ENCODE measurements at regions of chr5 and their contacts with region 1.

Region 1: GRCh38 chr5:79133657-79134451 is 22.2 kb downstream of the BHMT start:
- DNase-seq: peak; percentile 90
- ATAC-seq: peak; percentile 93
- H3K4me3 Mint-ChIP-seq: peak overlapping the region; percentile 61
- H3K27ac Mint-ChIP-seq: peak overlapping the region; percentile 88
- H3K4me1 Mint-ChIP-seq: peaks cover 22% of the 10 kb centered on the region
- H3K27me3 Mint-ChIP-seq: peaks cover 3% of the 10 kb centered on the region
- CTCF ChIP-seq: no peak

Region 2: DNA sequence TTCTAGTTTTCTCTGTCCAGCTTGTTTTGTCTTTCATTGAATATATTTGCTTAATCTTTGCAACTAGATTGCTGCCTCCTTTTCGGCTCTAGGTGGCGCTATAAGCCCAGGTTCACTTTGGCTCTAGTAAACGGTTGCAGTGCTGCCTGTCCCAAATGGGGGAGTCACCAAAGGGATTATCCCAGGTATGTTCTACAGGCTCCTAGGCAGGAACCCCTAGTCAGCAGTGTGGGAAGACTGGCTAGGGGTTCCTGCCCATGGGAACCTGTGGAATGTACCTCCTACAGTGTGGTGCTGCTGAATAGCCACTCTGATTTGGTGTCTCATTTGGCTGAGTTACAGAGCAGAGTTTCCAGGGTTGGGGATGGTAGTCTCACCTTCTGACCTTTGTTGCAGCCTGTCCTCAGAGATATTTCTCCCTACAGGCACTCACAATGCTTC is 233.9 kb before region 1 on chr5:
- CTCF ChIA-PET with region 1: interaction called, 11 read pairs
- POLR2A ChIA-PET with region 1: no interaction called
- intact Hi-C with region 1: no loop called
- DNase-seq: peak; percentile 43
- ATAC-seq: no peak
- H3K4me3 Mint-ChIP-seq: no peak overlapping the region
- H3K27ac Mint-ChIP-seq: no peak overlapping the region
- H3K4me1 Mint-ChIP-seq: no peaks in the 10 kb centered on the region
- H3K27me3 Mint-ChIP-seq: no peaks in the 10 kb centered on the region
- CTCF ChIP-seq: peak; percentile 33

Region 3: GRCh38 chr5:79020861-79021561 is 112.8 kb before region 1 on chr5:
- CTCF ChIA-PET with region 1: interaction called, 384 read pairs
- POLR2A ChIA-PET with region 1: interaction called, 3 read pairs
- intact Hi-C with region 1: loop called (anchors 1 kb)
- DNase-seq: peak; percentile 66
- ATAC-seq: peak; percentile 51
- H3K4me3 Mint-ChIP-seq: no peak overlapping the region
- H3K27ac Mint-ChIP-seq: no peak overlapping the region
- H3K4me1 Mint-ChIP-seq: peaks cover 5% of the 10 kb centered on the region
- H3K27me3 Mint-ChIP-seq: peaks cover 41% of the 10 kb centered on the region
- CTCF ChIP-seq: peak; percentile 68

Region 4: GRCh38 chr5:79074641-79075040 is 59.2 kb before region 1 on chr5:
- CTCF ChIA-PET with region 1: interaction called, 10 read pairs
- POLR2A ChIA-PET with region 1: no interaction called
- intact Hi-C with region 1: no loop called
- DNase-seq: peak; percentile 14
- ATAC-seq: peak; percentile 64
- H3K4me3 Mint-ChIP-seq: no peak overlapping the region
- H3K27ac Mint-ChIP-seq: no peak overlapping the region
- H3K4me1 Mint-ChIP-seq: peaks cover 11% of the 10 kb centered on the region
- H3K27me3 Mint-ChIP-seq: peaks cover 17% of the 10 kb centered on the region
- CTCF ChIP-seq: no peak

Region 5: GRCh38 chr5:79093762-79094161 is 40.1 kb before region 1 on chr5:
- CTCF ChIA-PET with region 1: no interaction called
- POLR2A ChIA-PET with region 1: no interaction called
- intact Hi-C with region 1: no loop called
- DNase-seq: no peak
- ATAC-seq: no peak
- H3K4me3 Mint-ChIP-seq: no peak overlapping the region
- H3K27ac Mint-ChIP-seq: no peak overlapping the region
- H3K4me1 Mint-ChIP-seq: no peaks in the 10 kb centered on the region
- H3K27me3 Mint-ChIP-seq: peaks cover 5% of the 10 kb centered on the region
- CTCF ChIP-seq: no peak

Region 6: DNA sequence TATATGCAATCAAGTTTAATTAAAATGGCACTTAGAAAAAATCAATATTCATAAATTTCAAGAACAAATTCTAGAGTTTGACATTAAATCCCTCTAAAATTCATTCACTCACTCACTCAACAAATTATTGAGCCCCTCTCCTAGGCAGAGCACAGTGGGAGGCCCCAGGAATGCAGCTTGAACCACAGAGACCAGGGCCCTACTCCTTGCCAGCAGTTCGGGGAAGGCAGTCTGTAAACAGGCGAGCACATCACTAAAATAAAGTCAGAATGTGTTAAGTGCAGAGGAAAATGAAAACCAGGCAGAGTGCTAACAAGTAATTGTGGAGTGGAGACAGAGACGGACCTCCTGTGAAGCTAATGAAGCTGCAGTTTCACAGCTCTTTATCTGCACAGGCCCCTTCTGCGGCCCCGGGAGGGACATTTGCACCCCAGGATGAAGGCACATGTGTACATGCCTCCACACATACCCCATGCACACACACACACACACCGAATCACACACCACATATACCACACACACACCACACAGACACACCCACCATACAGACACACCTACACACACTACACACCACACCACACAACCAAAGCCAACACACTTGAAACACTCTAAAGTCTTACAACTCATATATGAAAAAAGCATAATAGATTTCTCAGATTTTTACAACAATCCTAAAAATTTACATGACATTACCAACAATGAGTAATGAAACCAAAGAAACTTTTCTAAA is 18.3 kb after region 1 on chr5:
- CTCF ChIA-PET with region 1: interaction called, 13 read pairs
- POLR2A ChIA-PET with region 1: no interaction called
- intact Hi-C with region 1: no loop called
- DNase-seq: no peak
- ATAC-seq: no peak
- H3K4me3 Mint-ChIP-seq: no peak overlapping the region
- H3K27ac Mint-ChIP-seq: no peak overlapping the region
- H3K4me1 Mint-ChIP-seq: no peaks in the 10 kb centered on the region
- H3K27me3 Mint-ChIP-seq: peaks cover 7% of the 10 kb centered on the region
- CTCF ChIP-seq: no peak

Region 7: DNA sequence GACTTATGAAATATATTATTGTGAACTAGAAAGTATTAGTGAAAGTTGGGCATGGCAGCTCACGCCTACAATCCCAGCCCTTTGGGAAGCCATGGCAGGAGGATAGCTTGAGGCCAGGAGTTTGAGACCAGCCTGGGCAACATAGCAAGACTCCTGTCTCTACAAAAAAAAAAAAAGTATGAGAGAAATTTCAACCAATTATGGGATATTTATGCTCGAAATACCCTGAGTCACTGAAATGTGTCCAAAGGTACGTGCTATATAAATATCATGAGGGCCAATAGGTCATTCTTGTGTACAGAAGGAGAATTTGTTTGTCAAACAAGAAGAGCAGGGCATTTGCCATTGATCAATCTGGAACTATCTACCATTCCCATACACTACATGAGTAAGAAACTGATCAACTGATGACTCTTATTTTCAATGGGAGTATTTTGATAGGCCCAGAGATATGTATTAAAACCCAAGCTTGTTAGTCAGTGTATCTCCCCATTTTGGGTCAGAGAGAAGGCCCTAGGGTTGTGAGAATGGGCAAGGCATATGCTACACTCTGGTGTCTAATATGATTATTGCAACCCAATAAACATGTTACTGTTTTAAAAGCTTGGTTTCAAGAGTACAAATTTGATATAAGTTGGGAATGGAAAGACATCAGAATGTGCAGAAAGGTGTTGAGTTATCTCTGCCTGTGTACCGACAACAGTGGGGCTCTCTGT is 401.8 kb after region 1 on chr5:
- CTCF ChIA-PET with region 1: interaction called, 10 read pairs
- POLR2A ChIA-PET with region 1: no interaction called
- intact Hi-C with region 1: no loop called
- DNase-seq: no peak
- ATAC-seq: no peak
- H3K4me3 Mint-ChIP-seq: no peak overlapping the region
- H3K27ac Mint-ChIP-seq: no peak overlapping the region
- H3K4me1 Mint-ChIP-seq: no peaks in the 10 kb centered on the region
- H3K27me3 Mint-ChIP-seq: no peaks in the 10 kb centered on the region
- CTCF ChIP-seq: no peak

Measured in activated CD8-positive, alpha-beta T cell treated with anti-CD3 and anti-CD28 coated beads for 36 hours (primary cell).